A673 (cell line): ENCODE measurements at regions of chr6 and their contacts with region 1.

Region 1: DNA sequence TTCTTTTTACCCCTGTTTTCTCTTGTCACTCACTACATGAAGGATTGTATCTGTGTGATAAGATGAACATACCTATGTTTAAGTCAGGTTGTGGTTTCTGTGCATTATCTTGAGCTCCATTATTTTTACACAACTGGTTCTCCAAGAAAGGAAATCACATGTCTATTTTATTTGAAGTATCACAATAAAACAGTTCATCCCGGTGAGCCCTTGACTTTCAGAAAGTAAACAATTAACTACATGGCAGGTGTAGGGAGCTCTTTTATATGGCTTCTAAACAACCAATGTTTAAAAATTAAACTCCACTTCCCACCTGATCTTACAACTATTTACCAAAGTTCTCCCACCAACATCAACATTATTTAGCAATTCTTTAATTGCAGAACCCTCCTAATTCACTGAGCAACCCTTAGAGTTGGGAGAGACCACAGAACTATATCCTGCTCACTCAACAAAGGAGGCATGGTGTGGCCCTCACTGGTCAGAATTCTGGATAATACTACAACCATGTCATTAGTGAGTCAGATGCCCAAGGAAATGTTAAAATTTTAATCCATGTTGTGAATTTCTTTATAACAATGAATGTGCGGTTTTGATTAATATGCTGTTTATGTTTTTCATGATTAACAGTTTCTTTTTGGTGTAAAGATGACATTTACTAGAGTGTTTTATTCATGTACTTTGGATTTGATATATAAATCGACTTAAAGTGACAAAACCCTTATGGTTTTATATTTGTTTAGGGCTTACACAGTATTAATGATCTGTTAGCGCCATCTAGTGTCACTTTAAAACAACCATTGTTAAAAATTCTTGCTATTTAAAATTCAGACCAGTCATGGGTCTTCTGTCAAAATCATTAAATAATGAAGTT is 50.0 kb upstream of the SCGN start:
- DNase-seq: peak; percentile 66
- H3K4me3 ChIP-seq: no peak overlapping the region
- H3K27ac ChIP-seq: no peak overlapping the region
- H3K4me1 ChIP-seq: no peaks in the 10 kb centered on the region
- H3K27me3 ChIP-seq: no peaks in the 10 kb centered on the region
- CTCF ChIP-seq: peak; percentile 64

Region 2: DNA sequence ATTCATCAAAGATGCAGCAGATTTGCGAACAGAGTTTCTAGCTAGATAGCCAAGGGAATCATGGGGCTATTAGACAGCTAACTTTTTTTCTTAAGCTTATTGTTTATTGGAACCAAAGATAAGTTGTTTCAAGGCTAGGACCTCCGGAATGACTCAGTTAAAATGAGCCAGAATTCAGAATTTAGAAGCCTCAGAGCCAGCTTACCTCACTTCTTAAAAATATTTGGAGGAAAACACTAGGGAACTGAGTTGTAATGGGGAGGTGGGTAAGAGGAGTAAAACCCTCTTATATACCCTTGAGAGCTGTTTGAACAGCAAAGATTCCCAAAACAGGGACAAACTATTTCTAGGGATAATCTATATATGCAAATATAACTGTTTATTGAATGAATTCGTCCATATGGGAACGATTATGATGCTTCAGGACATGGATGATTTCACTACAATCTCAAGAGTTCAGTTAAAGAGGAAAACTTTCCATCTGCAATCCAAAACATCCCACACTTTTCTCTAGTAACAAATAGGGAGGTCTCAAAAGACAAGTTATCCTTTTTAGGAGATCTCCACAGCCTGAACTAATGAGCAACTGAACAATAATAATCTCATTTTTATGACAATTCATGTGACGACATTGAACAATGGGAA is 335.5 kb before region 1 on chr6:
- CTCF ChIA-PET with region 1: interaction called, 3 read pairs
- POLR2A ChIA-PET with region 1: no interaction called
- intact Hi-C with region 1: loop called (anchors 5 kb)
- DNase-seq: no peak
- H3K4me3 ChIP-seq: no peak overlapping the region
- H3K27ac ChIP-seq: no peak overlapping the region
- H3K4me1 ChIP-seq: peaks cover 13% of the 10 kb centered on the region
- H3K27me3 ChIP-seq: no peaks in the 10 kb centered on the region
- CTCF ChIP-seq: no peak